T-cell (primary cell): ENCODE measurements at regions of chr17 and their contacts with region 1.

Region 1: GRCh38 chr17:1783271-1783670 is 21.4 kb downstream of the SERPINF1 start:
- DNase-seq: peak in 1 of 35 experiments; percentile 3
- ATAC-seq: no peak
- H3K4me3 ChIP-seq: no peak overlapping the region
- H3K4me3 Mint-ChIP-seq: no peak overlapping the region
- H3K27ac ChIP-seq: no peak overlapping the region
- H3K27ac Mint-ChIP-seq: peak overlapping the region; percentile 72 to 80
- H3K4me1 ChIP-seq: no peaks in the 10 kb centered on the region
- H3K4me1 Mint-ChIP-seq: peaks cover 0 to 13% (median 11%) of the 10 kb centered on the region in 3 donors
- H3K27me3 ChIP-seq: no peaks in the 10 kb centered on the region
- H3K27me3 Mint-ChIP-seq: no peaks in the 10 kb centered on the region

Region 2: GRCh38 chr17:1769822-1770477 is 13.3 kb before region 1 on chr17:
- CTCF ChIA-PET with region 1: interaction called in 1 of 2 experiments, 5 read pairs
- POLR2A ChIA-PET with region 1: interaction called in 1 of 2 experiments, 12 read pairs
- DNase-seq: peak in 8 of 35 experiments; percentile 7 to 34 (median 18)
- ATAC-seq: peak; percentile 54 to 66 (median 62)
- H3K4me3 ChIP-seq: peak overlapping the region in 1 of 2 donors; percentile 71
- H3K4me3 Mint-ChIP-seq: peak overlapping the region in 2 of 3 donors; percentile 55 to 66
- H3K27ac ChIP-seq: peak overlapping the region; percentile 52
- H3K27ac Mint-ChIP-seq: peak overlapping the region; percentile 85 to 92
- H3K4me1 ChIP-seq: peaks cover 6 to 32% of the 10 kb centered on the region in 2 experiments
- H3K4me1 Mint-ChIP-seq: peaks cover 17 to 33% (median 29%) of the 10 kb centered on the region in 3 donors
- H3K27me3 ChIP-seq: peaks cover 0 to 5% of the 10 kb centered on the region in 2 experiments
- H3K27me3 Mint-ChIP-seq: no peaks in the 10 kb centered on the region